Breast epithelium (tissue), 4 donors: ENCODE measurements at regions of chr3 and their contacts with region 1.

Region 1: GRCh38 chr3:108546247-108546646 is 35.9 kb upstream of the MYH15 start:
- DNase-seq: no peak
- H3K4me3 ChIP-seq: no peak overlapping the region
- H3K27ac ChIP-seq: no peak overlapping the region
- H3K4me1 ChIP-seq: no peaks in the 10 kb centered on the region
- H3K27me3 ChIP-seq: no peaks in the 10 kb centered on the region
- CTCF ChIP-seq: no peak
- POLR2A ChIP-seq: no peak

Region 2: DNA sequence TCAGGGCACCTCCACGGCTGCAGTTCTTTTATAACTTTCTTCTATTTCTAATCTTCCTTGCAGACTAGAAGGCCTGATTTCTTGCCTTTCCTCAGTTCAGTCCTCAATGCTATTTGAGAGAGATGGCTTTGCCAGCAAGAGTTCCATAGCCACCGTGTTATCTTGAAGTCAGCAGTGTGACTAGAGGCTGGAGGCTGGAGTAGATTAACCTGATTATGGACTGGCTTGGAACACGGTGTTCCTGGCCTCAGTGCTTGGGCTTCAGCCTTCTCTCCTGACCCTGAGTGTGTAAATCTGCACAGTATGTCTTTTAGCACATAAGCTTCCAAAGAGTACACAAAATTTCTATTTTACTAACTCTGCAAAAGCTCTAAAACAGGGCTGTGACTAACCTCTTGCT is 1107.6 kb before region 1 on chr3:
- intact Hi-C with region 1: loop called (anchors 5 kb)
- DNase-seq: no peak
- H3K4me3 ChIP-seq: no peak overlapping the region
- H3K27ac ChIP-seq: no peak overlapping the region
- H3K4me1 ChIP-seq: no peaks in the 10 kb centered on the region
- H3K27me3 ChIP-seq: no peaks in the 10 kb centered on the region
- CTCF ChIP-seq: no peak
- POLR2A ChIP-seq: no peak